PC-9 (cell line): ENCODE measurements at regions of chr11 and their contacts with region 1.

Region 1: GRCh38 chr11:70061734-70062133 is 16.4 kb upstream of the ANO1 start:
- DNase-seq: no peak
- H3K4me3 ChIP-seq: no peak overlapping the region
- H3K27ac ChIP-seq: no peak overlapping the region
- H3K4me1 ChIP-seq: peaks cover 67% of the 10 kb centered on the region
- H3K27me3 ChIP-seq: no peaks in the 10 kb centered on the region
- CTCF ChIP-seq: no peak

Region 2: GRCh38 chr11:69967486-69967885 is 94.2 kb before region 1 on chr11:
- CTCF ChIA-PET with region 1: interaction called, 10 read pairs
- POLR2A ChIA-PET with region 1: no interaction called
- intact Hi-C with region 1: no loop called
- DNase-seq: peak in 1 of 2 experiments; percentile 72
- H3K4me3 ChIP-seq: no peak overlapping the region
- H3K27ac ChIP-seq: no peak overlapping the region
- H3K4me1 ChIP-seq: peaks cover 49% of the 10 kb centered on the region
- H3K27me3 ChIP-seq: no peaks in the 10 kb centered on the region
- CTCF ChIP-seq: no peak